Naive thymus-derived CD4-positive, alpha-beta T cell (primary cell): ENCODE measurements at regions of chrX and their contacts with region 1.

Region 1: DNA sequence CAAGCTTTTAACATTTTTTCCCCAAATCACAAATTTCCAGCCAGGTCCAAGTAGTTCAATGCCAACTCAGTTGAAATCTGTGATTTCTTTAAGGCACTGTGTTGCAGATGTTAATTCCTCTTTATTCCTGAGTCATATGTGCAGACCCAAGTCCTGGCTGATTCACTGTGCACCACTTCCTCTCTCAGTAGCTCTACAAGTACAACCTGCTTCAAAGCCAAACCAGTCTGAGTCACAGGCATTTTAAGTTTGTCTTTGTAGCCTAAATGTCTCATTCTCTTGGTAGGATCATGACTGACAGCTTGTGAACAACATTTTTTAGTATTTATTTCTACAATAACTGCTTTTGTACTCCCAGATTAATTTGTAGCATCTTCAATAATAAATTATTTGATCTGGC is 165.6 kb upstream of the S100G start:
- DNase-seq: peak in 8 of 9 donors; percentile 13 to 49 (median 32)
- ATAC-seq: peak; percentile 92
- H3K4me3 ChIP-seq: no peak overlapping the region
- H3K4me3 Mint-ChIP-seq: peak overlapping the region in 1 of 10 donors; percentile 24
- H3K27ac ChIP-seq: no peak overlapping the region
- H3K27ac Mint-ChIP-seq: peak overlapping the region in 5 of 9 donors; percentile 10 to 79 (median 12)
- H3K4me1 ChIP-seq: peaks cover 0 to 5% of the 10 kb centered on the region in 2 donors
- H3K4me1 Mint-ChIP-seq: peaks cover 7 to 28% (median 12%) of the 10 kb centered on the region in 7 donors
- H3K27me3 ChIP-seq: no peaks in the 10 kb centered on the region
- H3K27me3 Mint-ChIP-seq: no peaks in the 10 kb centered on the region

Region 2: GRCh38 chrX:15416133-15416993 is 1068.0 kb before region 1 on chrX:
- CTCF ChIA-PET with region 1: no interaction called
- POLR2A ChIA-PET with region 1: no interaction called
- intact Hi-C with region 1: no loop called
- DNase-seq: no peak
- ATAC-seq: no peak
- H3K4me3 ChIP-seq: no peak overlapping the region
- H3K4me3 Mint-ChIP-seq: no peak overlapping the region
- H3K27ac ChIP-seq: no peak overlapping the region
- H3K27ac Mint-ChIP-seq: no peak overlapping the region
- H3K4me1 ChIP-seq: no peaks in the 10 kb centered on the region
- H3K4me1 Mint-ChIP-seq: no peaks in the 10 kb centered on the region
- H3K27me3 ChIP-seq: no peaks in the 10 kb centered on the region
- H3K27me3 Mint-ChIP-seq: peaks cover 0 to 11% (median 4%) of the 10 kb centered on the region in 5 donors

Region 3: DNA sequence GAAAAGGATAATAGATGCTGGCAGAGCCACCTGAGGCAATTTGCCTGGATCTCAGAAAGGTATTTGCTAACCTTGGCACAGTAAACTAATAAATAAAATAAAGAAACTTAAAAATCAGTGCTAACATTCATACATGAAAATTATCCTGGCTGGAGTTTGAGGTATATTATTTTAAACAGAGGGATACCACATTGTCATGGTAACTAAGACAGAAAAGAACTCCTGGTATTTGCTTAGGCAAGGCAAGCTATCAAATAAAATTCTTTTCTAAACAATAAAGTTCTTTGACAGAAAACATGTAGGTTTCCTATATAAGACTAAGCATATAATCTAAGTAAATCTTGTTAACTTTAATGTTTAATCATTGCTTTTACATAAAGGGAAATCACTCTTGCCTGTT is 98.2 kb before region 1 on chrX:
- CTCF ChIA-PET with region 1: no interaction called
- POLR2A ChIA-PET with region 1: no interaction called
- intact Hi-C with region 1: no loop called
- DNase-seq: no peak
- ATAC-seq: no peak
- H3K4me3 ChIP-seq: no peak overlapping the region
- H3K4me3 Mint-ChIP-seq: no peak overlapping the region
- H3K27ac ChIP-seq: no peak overlapping the region
- H3K27ac Mint-ChIP-seq: no peak overlapping the region
- H3K4me1 ChIP-seq: no peaks in the 10 kb centered on the region
- H3K4me1 Mint-ChIP-seq: peaks cover 0 to 1% (median 0%) of the 10 kb centered on the region in 7 donors
- H3K27me3 ChIP-seq: no peaks in the 10 kb centered on the region
- H3K27me3 Mint-ChIP-seq: peaks cover 0 to 16% (median 4%) of the 10 kb centered on the region in 5 donors

Region 4: DNA sequence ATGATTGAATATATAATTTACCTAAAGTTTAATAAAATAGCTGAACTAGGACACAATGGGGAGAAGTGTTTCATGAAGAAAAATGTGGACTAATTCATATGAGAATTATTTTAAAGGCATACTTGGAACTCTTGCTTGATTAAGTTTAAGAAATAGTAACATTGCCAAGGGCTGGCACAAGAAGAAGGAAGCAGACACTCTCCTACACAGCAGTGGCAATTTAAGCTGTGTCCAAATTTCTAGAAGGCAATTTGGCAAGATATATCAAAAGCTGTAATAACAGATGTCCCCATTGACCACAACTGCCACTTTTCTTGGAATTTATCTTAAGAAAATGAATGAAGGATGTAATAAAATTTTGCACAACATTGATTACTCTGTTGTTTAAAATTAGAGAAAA is 43.9 kb before region 1 on chrX:
- CTCF ChIA-PET with region 1: no interaction called
- POLR2A ChIA-PET with region 1: no interaction called
- intact Hi-C with region 1: no loop called
- DNase-seq: no peak
- ATAC-seq: no peak
- H3K4me3 ChIP-seq: no peak overlapping the region
- H3K4me3 Mint-ChIP-seq: no peak overlapping the region
- H3K27ac ChIP-seq: no peak overlapping the region
- H3K27ac Mint-ChIP-seq: no peak overlapping the region
- H3K4me1 ChIP-seq: no peaks in the 10 kb centered on the region
- H3K4me1 Mint-ChIP-seq: peaks cover 0 to 5% (median 0%) of the 10 kb centered on the region in 7 donors
- H3K27me3 ChIP-seq: no peaks in the 10 kb centered on the region
- H3K27me3 Mint-ChIP-seq: peaks cover 0 to 3% (median 0%) of the 10 kb centered on the region in 5 donors

Region 5: GRCh38 chrX:16603822-16604221 is 119.5 kb after region 1 on chrX:
- CTCF ChIA-PET with region 1: no interaction called
- POLR2A ChIA-PET with region 1: interaction called, 3 read pairs
- intact Hi-C with region 1: loop called in 1 of 2 experiments (anchors 5 kb)
- DNase-seq: peak in 5 of 9 donors; percentile 4 to 33 (median 21)
- ATAC-seq: no peak
- H3K4me3 ChIP-seq: no peak overlapping the region
- H3K4me3 Mint-ChIP-seq: peak overlapping the region; percentile 23 to 86 (median 76)
- H3K27ac ChIP-seq: peak overlapping the region; percentile 58
- H3K27ac Mint-ChIP-seq: peak overlapping the region; percentile 79 to 96 (median 93)
- H3K4me1 ChIP-seq: peaks cover 0 to 32% of the 10 kb centered on the region in 2 donors
- H3K4me1 Mint-ChIP-seq: peaks cover 4 to 54% (median 39%) of the 10 kb centered on the region in 7 donors
- H3K27me3 ChIP-seq: no peaks in the 10 kb centered on the region
- H3K27me3 Mint-ChIP-seq: no peaks in the 10 kb centered on the region

Region 6: DNA sequence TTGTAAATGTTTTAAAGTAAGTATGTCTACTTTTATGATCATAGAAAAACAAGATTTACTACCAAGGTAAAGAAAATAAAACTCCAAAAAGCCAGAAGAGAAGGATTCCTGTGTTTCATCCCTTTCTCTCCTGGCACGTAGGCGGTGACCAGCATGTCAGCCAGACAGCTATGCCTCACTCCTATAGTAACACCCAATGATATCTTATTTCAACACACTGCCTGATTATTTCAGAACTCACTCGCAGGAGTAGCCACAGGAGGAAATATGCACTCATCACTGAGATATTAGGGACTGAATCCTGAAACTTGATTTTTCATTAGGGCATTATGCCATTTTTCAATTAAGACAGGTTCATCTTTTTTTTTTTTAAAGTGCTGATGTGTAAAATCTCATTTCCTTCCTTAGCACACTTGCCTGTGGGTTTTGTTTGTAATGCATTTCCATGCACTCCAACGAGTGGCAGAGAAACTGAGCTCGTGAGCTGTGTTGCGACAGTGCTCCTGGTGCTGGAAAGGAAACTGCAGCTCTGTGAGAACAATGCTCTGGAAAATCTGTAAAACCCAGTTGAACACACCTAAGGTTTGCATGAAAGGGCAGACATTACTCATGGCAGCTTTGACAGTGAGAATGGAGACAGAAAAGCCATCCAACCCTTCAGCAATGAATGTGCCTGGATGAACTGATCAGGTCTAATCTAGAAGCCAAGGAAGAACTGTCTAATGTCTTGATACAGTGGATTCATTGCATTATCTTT is 1358.6 kb after region 1 on chrX:
- CTCF ChIA-PET with region 1: no interaction called
- POLR2A ChIA-PET with region 1: no interaction called
- intact Hi-C with region 1: no loop called
- DNase-seq: no peak
- ATAC-seq: no peak
- H3K4me3 ChIP-seq: no peak overlapping the region
- H3K4me3 Mint-ChIP-seq: no peak overlapping the region
- H3K27ac ChIP-seq: no peak overlapping the region
- H3K27ac Mint-ChIP-seq: no peak overlapping the region
- H3K4me1 ChIP-seq: no peaks in the 10 kb centered on the region
- H3K4me1 Mint-ChIP-seq: peaks cover 0 to 4% (median 0%) of the 10 kb centered on the region in 7 donors
- H3K27me3 ChIP-seq: no peaks in the 10 kb centered on the region
- H3K27me3 Mint-ChIP-seq: no peaks in the 10 kb centered on the region